Panc1 (cell line): ENCODE measurements at regions of chr15 and their contacts with region 1.

Region 1: DNA sequence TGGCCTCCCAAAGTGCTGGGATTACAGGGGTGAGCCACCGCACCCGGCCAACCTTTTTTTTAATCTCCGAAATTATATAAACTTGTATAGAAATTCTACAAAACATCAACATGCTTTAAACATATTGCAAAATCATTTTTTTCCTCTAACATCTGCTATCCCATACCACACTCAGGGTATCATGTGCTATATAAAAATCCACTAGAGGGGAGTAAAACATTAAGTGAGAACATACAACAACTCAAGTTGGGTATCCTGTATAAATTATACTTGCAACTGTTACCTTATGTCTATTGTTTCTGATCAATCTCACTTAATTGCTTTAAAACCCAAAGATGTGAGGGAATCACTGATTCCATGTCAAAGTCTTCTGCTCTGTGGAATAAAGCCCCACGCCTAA is 71.9 kb upstream of the FBN1 start:
- DNase-seq: no peak
- ATAC-seq: no peak
- H3K4me3 ChIP-seq: no peak overlapping the region
- H3K27ac ChIP-seq: no peak overlapping the region
- H3K4me1 ChIP-seq: no peaks in the 10 kb centered on the region
- H3K27me3 ChIP-seq: no peaks in the 10 kb centered on the region
- CTCF ChIP-seq: no peak

Region 2: DNA sequence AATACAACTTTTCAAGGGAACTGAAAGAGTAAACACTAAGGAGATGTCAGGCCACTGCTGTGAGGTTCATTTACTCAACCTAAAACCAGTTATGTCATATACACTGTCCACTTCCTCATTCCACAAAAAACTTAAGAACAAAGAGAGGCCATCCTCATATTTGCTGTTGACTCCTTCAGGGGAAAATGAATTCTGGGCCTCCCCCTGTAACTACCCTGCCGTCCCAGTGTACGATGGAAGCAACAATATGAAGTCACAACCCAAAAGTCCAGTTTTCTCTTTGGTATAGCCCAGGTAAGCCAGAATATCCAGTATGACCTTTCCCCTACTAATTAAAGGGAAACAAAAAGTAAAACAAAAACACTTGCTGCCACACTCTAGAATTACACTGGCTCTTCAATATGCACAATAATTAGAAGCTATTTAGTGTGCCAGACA is 77.3 kb after region 1 on chr15:
- CTCF ChIA-PET with region 1: no interaction called
- POLR2A ChIA-PET with region 1: no interaction called
- in situ Hi-C with region 1: no loop called
- intact Hi-C with region 1: no loop called
- DNase-seq: no peak
- ATAC-seq: no peak
- H3K4me3 ChIP-seq: no peak overlapping the region
- H3K27ac ChIP-seq: 0 out of 2 replicates have a peak overlapping the region, but pooled peaks have one; percentile 6
- H3K4me1 ChIP-seq: no peaks in the 10 kb centered on the region
- H3K27me3 ChIP-seq: no peaks in the 10 kb centered on the region
- CTCF ChIP-seq: no peak

Region 3: DNA sequence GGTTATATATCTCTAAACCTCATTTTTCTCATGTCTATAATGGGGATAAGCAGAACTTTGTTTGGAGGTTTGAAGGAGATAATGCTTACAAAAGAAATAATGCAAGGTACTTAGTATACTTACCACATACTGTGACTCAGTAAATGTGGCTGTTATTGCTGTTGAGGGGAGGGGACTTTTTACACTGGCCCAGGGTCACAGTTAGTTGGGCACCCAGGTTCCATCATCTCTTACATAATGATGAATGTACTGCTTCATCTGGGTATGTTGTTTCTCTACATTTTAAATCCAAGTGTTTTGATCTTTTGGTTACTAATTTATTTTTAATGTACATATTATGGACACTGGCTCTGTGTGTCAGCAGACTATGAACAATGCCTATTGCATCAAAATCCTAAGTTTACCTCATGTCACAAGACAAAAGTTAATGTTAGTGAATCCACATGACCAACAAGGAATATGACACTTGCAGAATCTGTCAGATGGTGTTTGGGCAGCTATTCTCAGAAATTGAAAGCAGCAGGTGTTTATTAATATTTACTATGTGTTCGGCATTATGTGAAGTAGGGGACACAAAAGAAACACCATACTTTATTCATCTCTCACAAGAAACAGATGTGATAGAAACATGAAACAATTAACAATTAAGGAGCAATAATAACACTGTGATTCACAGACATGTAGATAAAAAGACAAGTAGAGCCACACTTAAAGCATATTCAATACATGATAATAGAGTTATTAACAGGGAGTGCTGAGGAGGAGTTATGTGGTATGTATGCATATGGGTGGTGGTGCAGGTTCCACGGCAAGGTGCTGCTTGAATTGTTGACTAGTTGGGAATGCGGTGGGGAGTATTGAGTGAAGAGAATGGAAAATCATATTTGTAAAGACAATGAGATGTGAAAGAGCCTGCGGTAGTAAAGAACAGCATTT is 562.3 kb after region 1 on chr15:
- CTCF ChIA-PET with region 1: interaction called, 14 read pairs
- POLR2A ChIA-PET with region 1: no interaction called
- in situ Hi-C with region 1: no loop called
- intact Hi-C with region 1: no loop called
- DNase-seq: no peak
- ATAC-seq: no peak
- H3K4me3 ChIP-seq: no peak overlapping the region
- H3K27ac ChIP-seq: no peak overlapping the region
- H3K4me1 ChIP-seq: no peaks in the 10 kb centered on the region
- H3K27me3 ChIP-seq: no peaks in the 10 kb centered on the region
- CTCF ChIP-seq: no peak